GM12878 (cell line): ENCODE measurements at regions of chr2 and their contacts with region 1.

Region 1: DNA sequence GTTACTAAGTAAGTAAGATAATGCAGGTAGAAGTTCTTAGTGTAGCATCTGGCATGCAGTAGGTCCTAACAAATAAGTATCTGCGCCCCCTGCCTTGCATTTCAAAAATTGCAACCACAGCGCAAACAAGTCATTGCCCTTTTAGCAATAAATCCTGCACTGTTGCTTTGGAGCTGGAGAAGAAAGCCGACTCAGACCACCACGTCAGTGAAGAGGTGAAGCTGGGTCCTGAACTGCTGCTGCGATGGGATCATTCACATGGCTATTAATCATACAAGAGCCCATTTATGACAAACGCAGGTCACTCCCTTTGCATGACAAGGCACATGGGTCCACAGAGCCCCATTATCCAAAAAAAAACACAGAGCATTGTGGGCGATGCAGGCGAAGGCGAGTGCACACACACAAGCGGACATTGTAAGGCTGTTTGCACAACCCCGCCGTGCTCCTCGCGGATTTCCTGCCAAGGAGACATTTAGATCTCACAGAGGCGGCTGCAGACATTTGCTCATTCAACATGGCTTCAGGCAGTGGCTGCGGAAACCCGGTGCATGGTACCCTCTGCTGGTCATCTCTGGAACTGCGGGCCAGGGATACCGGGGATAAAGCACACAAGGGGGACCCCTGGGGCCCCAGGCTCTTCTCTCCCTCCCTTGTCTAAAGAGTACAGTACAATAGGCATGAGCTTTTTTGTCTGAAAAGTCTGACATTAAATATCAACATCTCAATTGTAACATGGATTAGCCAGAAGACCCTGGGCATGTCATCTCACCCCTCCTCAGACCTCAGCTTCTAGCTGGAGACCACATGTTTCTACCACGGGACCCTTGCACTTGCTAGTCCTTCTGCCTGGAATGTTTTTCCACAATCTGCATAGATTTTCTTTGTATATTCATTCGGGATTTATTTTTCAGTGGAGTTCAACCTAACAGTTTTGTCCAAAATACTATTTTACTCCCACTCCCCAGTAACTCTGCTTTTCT is 56.7 kb downstream of the CYRIA start:
- DNase-seq: peak; percentile 16
- ATAC-seq: peak; percentile 97
- H3K4me3 ChIP-seq: peak overlapping the region; percentile 44
- H3K27ac ChIP-seq: no peak overlapping the region
- H3K4me1 ChIP-seq: no peaks in the 10 kb centered on the region
- H3K27me3 ChIP-seq: no peaks in the 10 kb centered on the region
- CTCF ChIP-seq: peak; percentile 93 to 99 (median 94)
- EP300 ChIP-seq: no peak
- POLR2A ChIP-seq: no peak
- RAD21 ChIP-seq: peak; percentile 74

Region 2: GRCh38 chr2:15636972-15637785 is 971.8 kb before region 1 on chr2:
- CTCF ChIA-PET with region 1: interaction called, 3 read pairs
- POLR2A ChIA-PET with region 1: no interaction called
- RAD21 ChIA-PET with region 1: interaction called, 3 read pairs
- SMC1A ChIA-PET with region 1: no interaction called
- in situ Hi-C with region 1: loop called (anchors 10 kb)
- intact Hi-C with region 1: loop called (anchors 1 kb)
- DNase-seq: no peak
- ATAC-seq: peak; percentile 99
- H3K4me3 ChIP-seq: no peak overlapping the region
- H3K27ac ChIP-seq: no peak overlapping the region
- H3K4me1 ChIP-seq: no peaks in the 10 kb centered on the region
- H3K27me3 ChIP-seq: no peaks in the 10 kb centered on the region
- CTCF ChIP-seq: peak; percentile 72 to 97 (median 89); a peak in 5 of 6 replicates
- EP300 ChIP-seq: no peak
- POLR2A ChIP-seq: no peak
- RAD21 ChIP-seq: peak; percentile 89

Region 3: GRCh38 chr2:16495509-16496208 is 113.3 kb before region 1 on chr2:
- CTCF ChIA-PET with region 1: no interaction called
- POLR2A ChIA-PET with region 1: no interaction called
- RAD21 ChIA-PET with region 1: no interaction called
- SMC1A ChIA-PET with region 1: no interaction called
- in situ Hi-C with region 1: no loop called
- intact Hi-C with region 1: no loop called
- DNase-seq: no peak
- ATAC-seq: no peak
- H3K4me3 ChIP-seq: no peak overlapping the region
- H3K27ac ChIP-seq: no peak overlapping the region
- H3K4me1 ChIP-seq: no peaks in the 10 kb centered on the region
- H3K27me3 ChIP-seq: no peaks in the 10 kb centered on the region
- CTCF ChIP-seq: no peak
- EP300 ChIP-seq: no peak
- POLR2A ChIP-seq: no peak
- RAD21 ChIP-seq: no peak

Region 4: GRCh38 chr2:16525265-16525887 is 83.6 kb before region 1 on chr2:
- CTCF ChIA-PET with region 1: interaction called, 17 read pairs
- POLR2A ChIA-PET with region 1: no interaction called
- RAD21 ChIA-PET with region 1: interaction called, 4 read pairs
- SMC1A ChIA-PET with region 1: interaction called, 19 read pairs
- in situ Hi-C with region 1: no loop called
- intact Hi-C with region 1: loop called (anchors 2 kb)
- DNase-seq: no peak
- ATAC-seq: peak; percentile 80
- H3K4me3 ChIP-seq: no peak overlapping the region
- H3K27ac ChIP-seq: no peak overlapping the region
- H3K4me1 ChIP-seq: no peaks in the 10 kb centered on the region
- H3K27me3 ChIP-seq: no peaks in the 10 kb centered on the region; a peak in 1 of 4 replicates
- CTCF ChIP-seq: peak; percentile 52 to 64 (median 58)
- EP300 ChIP-seq: no peak
- POLR2A ChIP-seq: no peak
- RAD21 ChIP-seq: peak; percentile 74

Region 5: GRCh38 chr2:16553226-16553625 is 55.7 kb before region 1 on chr2:
- CTCF ChIA-PET with region 1: interaction called, 22 read pairs
- POLR2A ChIA-PET with region 1: no interaction called
- RAD21 ChIA-PET with region 1: no interaction called
- SMC1A ChIA-PET with region 1: interaction called, 4 read pairs
- in situ Hi-C with region 1: no loop called
- intact Hi-C with region 1: loop called (anchors 1 kb)
- DNase-seq: no peak
- ATAC-seq: peak; percentile 73
- H3K4me3 ChIP-seq: no peak overlapping the region
- H3K27ac ChIP-seq: no peak overlapping the region
- H3K4me1 ChIP-seq: no peaks in the 10 kb centered on the region
- H3K27me3 ChIP-seq: no peaks in the 10 kb centered on the region
- CTCF ChIP-seq: peak; percentile 53 to 62 (median 57)
- EP300 ChIP-seq: no peak
- POLR2A ChIP-seq: no peak
- RAD21 ChIP-seq: peak; percentile 48; the same call in 1 of the 2 replicates

Region 6: GRCh38 chr2:16650287-16651249 is 41.6 kb after region 1 on chr2:
- CTCF ChIA-PET with region 1: interaction called, 14 read pairs
- POLR2A ChIA-PET with region 1: no interaction called
- RAD21 ChIA-PET with region 1: interaction called, 3 read pairs
- SMC1A ChIA-PET with region 1: interaction called, 30 read pairs
- in situ Hi-C with region 1: no loop called
- intact Hi-C with region 1: no loop called
- DNase-seq: no peak
- ATAC-seq: peak; percentile 6; the same call in 2 of the 3 replicates
- H3K4me3 ChIP-seq: no peak overlapping the region
- H3K27ac ChIP-seq: no peak overlapping the region
- H3K4me1 ChIP-seq: peaks cover 40% of the 10 kb centered on the region
- H3K27me3 ChIP-seq: no peaks in the 10 kb centered on the region; a peak in 1 of 4 replicates
- CTCF ChIP-seq: no peak
- EP300 ChIP-seq: 0 out of 4 replicates have a peak, but pooled peaks of 1 of the 2 experiments have one; percentile 35
- POLR2A ChIP-seq: no peak
- RAD21 ChIP-seq: no peak

Region 7: DNA sequence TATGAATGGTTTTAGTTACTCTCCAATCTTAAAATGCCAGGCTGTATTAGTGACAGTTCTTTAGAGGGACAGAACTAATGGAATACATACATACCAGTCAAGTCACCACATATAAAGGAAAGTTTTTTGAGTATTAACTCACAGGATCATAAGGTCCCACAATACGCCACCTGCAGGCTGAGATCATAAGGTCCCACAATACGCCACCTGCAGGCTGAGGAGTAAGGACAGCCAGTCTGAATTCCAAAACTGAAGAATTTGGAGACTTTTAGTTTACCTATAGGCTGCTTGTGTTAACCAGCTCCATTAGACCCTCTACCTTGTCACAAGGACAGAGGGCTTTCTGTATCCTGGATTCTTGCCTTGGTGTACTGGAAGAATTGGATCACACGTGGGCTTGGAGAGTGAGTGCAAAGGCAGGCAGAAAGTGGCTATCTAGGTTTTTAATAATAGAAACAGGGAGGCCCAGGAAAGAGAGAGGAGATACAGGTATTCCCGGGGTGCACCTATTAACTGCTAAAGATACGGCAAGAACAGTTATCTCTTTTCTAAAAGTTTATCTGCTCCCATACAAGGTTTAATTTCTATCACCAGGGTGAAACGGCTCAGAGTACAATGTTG is 291.6 kb after region 1 on chr2:
- CTCF ChIA-PET with region 1: no interaction called
- POLR2A ChIA-PET with region 1: no interaction called
- RAD21 ChIA-PET with region 1: no interaction called
- SMC1A ChIA-PET with region 1: no interaction called
- in situ Hi-C with region 1: no loop called
- intact Hi-C with region 1: loop called (anchors 10 kb)
- DNase-seq: no peak
- ATAC-seq: peak; percentile 93
- H3K4me3 ChIP-seq: no peak overlapping the region
- H3K27ac ChIP-seq: no peak overlapping the region
- H3K4me1 ChIP-seq: no peaks in the 10 kb centered on the region
- H3K27me3 ChIP-seq: no peaks in the 10 kb centered on the region; a peak in 1 of 4 replicates
- CTCF ChIP-seq: peak; percentile 83 to 94 (median 93)
- EP300 ChIP-seq: no peak
- POLR2A ChIP-seq: no peak
- RAD21 ChIP-seq: peak; percentile 47

Region 8: DNA sequence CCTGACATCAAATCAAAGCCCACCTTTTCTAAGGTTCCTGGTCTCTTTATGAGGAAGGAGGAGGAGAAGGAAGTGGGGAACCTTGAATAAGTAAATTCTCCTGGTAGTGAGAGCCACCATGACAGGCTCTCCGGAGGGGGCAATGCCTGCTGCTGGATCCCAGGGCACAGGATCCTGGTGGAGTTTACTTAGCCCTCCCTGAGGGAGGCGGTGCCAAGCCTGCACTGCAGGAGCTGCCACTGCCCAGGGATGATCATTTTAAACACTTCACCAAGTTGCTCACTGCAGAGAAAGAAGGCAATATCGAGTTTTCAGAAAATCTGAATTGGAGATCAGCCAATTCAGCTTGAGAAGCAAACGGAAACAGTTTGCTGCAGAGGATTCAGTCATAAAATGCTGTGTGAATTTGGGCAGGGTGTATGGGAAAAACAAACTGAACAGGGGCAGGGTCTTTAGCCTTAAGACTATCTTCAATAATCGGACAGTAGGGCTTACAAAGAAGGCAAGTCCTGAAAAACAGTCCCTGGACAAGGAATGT is 708.6 kb after region 1 on chr2:
- CTCF ChIA-PET with region 1: no interaction called
- POLR2A ChIA-PET with region 1: no interaction called
- RAD21 ChIA-PET with region 1: no interaction called
- SMC1A ChIA-PET with region 1: no interaction called
- in situ Hi-C with region 1: no loop called
- intact Hi-C with region 1: no loop called
- DNase-seq: no peak
- ATAC-seq: no peak
- H3K4me3 ChIP-seq: no peak overlapping the region
- H3K27ac ChIP-seq: no peak overlapping the region
- H3K4me1 ChIP-seq: no peaks in the 10 kb centered on the region
- H3K27me3 ChIP-seq: no peaks in the 10 kb centered on the region
- CTCF ChIP-seq: no peak
- EP300 ChIP-seq: no peak
- POLR2A ChIP-seq: no peak
- RAD21 ChIP-seq: no peak